Caco-2 (cell line): ENCODE measurements at regions of chr4 and their contacts with region 1.

Region 1: GRCh38 chr4:160685729-160686128 is 1478.1 kb downstream of the FSTL5 start:
- DNase-seq: no peak
- H3K4me3 ChIP-seq: no peak overlapping the region
- H3K4me3 Mint-ChIP-seq: no peak overlapping the region
- H3K27ac Mint-ChIP-seq: no peak overlapping the region
- H3K4me1 ChIP-seq: no peaks in the 10 kb centered on the region
- H3K4me1 Mint-ChIP-seq: no peaks in the 10 kb centered on the region
- H3K27me3 ChIP-seq: no peaks in the 10 kb centered on the region
- H3K27me3 Mint-ChIP-seq: no peaks in the 10 kb centered on the region
- CTCF ChIP-seq: no peak

Region 2: GRCh38 chr4:160701676-160702075 is 15.9 kb after region 1 on chr4:
- CTCF ChIA-PET with region 1: no interaction called
- POLR2A ChIA-PET with region 1: no interaction called
- intact Hi-C with region 1: loop called (anchors 1 kb)
- DNase-seq: no peak
- H3K4me3 ChIP-seq: no peak overlapping the region
- H3K4me3 Mint-ChIP-seq: no peak overlapping the region
- H3K27ac Mint-ChIP-seq: no peak overlapping the region
- H3K4me1 ChIP-seq: no peaks in the 10 kb centered on the region
- H3K4me1 Mint-ChIP-seq: no peaks in the 10 kb centered on the region
- H3K27me3 ChIP-seq: no peaks in the 10 kb centered on the region
- H3K27me3 Mint-ChIP-seq: no peaks in the 10 kb centered on the region
- CTCF ChIP-seq: no peak

Region 3: DNA sequence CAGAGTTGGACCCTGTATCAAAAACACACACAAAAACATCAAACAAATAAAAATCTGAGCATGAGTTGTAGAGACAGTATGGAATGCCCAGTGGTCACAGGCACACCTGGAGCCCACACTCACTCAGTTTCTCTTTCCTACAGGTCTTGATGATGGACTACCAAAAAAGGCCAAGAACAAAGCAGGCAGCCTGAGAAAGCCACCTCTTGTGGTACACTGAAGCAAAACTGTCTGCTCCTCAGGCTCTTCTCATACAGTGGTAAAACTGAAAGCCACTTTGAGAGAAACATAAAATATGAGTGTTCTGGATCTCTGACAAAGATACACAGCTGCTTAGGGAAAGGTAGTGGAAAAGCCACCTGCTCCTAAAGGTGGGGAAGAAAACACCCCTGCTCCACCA is 271.1 kb after region 1 on chr4:
- CTCF ChIA-PET with region 1: no interaction called
- POLR2A ChIA-PET with region 1: no interaction called
- intact Hi-C with region 1: no loop called
- DNase-seq: no peak
- H3K4me3 ChIP-seq: no peak overlapping the region
- H3K4me3 Mint-ChIP-seq: no peak overlapping the region
- H3K27ac Mint-ChIP-seq: no peak overlapping the region
- H3K4me1 ChIP-seq: no peaks in the 10 kb centered on the region
- H3K4me1 Mint-ChIP-seq: no peaks in the 10 kb centered on the region
- H3K27me3 ChIP-seq: no peaks in the 10 kb centered on the region
- H3K27me3 Mint-ChIP-seq: no peaks in the 10 kb centered on the region
- CTCF ChIP-seq: no peak